Caco-2 (cell line): ENCODE measurements at regions of chr19 and their contacts with region 1.

Region 1: GRCh38 chr19:38883286-38883685 is 5.2 kb upstream of the RINL start:
- DNase-seq: no peak
- H3K4me3 ChIP-seq: no peak overlapping the region
- H3K4me3 Mint-ChIP-seq: no peak overlapping the region
- H3K27ac Mint-ChIP-seq: peak overlapping the region; percentile 54
- H3K4me1 ChIP-seq: peaks cover 54% of the 10 kb centered on the region
- H3K4me1 Mint-ChIP-seq: peaks cover 16% of the 10 kb centered on the region
- H3K27me3 ChIP-seq: no peaks in the 10 kb centered on the region
- H3K27me3 Mint-ChIP-seq: no peaks in the 10 kb centered on the region
- CTCF ChIP-seq: no peak

Region 2: GRCh38 chr19:38899447-38900219 is 16.3 kb after region 1 on chr19 and contains the starts of genes NFKBIB and SIRT2:
- CTCF ChIA-PET with region 1: interaction called, 5 read pairs
- POLR2A ChIA-PET with region 1: interaction called, 12 read pairs
- intact Hi-C with region 1: no loop called
- DNase-seq: peak; percentile 99 to 100
- H3K4me3 ChIP-seq: peak within 1 kb of the TSS; percentile 82
- H3K4me3 Mint-ChIP-seq: peak within 1 kb of the TSS; percentile 75
- H3K27ac Mint-ChIP-seq: peak within 1 kb of the TSS; percentile 69
- H3K4me1 ChIP-seq: peaks cover 18% of the 10 kb centered on the region
- H3K4me1 Mint-ChIP-seq: peaks cover 24% of the 10 kb centered on the region
- H3K27me3 ChIP-seq: no peaks in the 10 kb centered on the region
- H3K27me3 Mint-ChIP-seq: no peaks in the 10 kb centered on the region
- CTCF ChIP-seq: no peak
- total RNA-seq, gene NFKBIB: 43.9 and 52.6 TPM in 2 replicates
- total RNA-seq, gene SIRT2: 33.3 and 34.4 TPM in 2 replicates